Heart left ventricle (tissue), 16 donors: ENCODE measurements at regions of chr7 and their contacts with region 1.

Region 1: GRCh38 chr7:91519241-91520158 is 255.3 kb downstream of the FZD1 start:
- DNase-seq: no peak
- ATAC-seq: no peak
- H3K4me3 ChIP-seq: no peak overlapping the region
- H3K27ac ChIP-seq: no peak overlapping the region
- H3K4me1 ChIP-seq: peaks cover 0 to 11% (median 0%) of the 10 kb centered on the region in 12 donors
- H3K27me3 ChIP-seq: no peaks in the 10 kb centered on the region
- CTCF ChIP-seq: no peak
- POLR2A ChIP-seq: no peak

Region 2: DNA sequence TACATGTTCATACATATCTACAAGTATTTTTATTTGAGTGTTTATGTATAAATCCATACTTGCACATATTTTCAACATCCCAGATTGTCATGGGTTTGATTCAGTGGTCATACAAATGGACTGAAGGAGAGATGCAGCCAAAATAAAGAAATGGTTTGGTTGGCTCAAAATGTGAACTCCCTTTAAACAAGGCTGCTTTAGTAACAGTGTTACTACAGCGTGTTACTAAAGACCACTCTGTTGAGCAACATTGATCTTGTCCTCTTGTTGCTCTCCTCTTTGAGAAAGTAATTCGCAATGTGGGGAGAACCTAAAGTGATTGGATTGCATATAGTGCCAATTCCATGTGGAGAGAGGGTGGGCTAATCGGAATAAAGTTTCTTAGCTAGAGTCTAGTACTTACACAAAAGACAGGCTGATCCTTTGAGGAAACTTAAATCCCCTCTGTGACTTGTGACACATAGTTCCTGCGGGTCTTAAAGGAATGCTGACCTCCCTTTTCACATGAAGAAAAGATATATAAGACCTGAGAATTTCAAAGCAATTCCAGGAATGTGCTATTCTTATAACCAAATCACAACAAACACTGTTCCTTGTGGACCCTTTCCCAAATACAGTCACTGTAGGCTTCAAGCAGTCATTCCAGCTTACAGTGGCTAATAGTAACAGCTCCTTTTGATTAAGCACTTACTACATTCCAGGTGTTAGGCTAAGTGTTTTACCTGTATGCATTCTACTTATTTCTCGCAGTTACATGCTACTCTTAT is 110.9 kb before region 1 on chr7:
- intact Hi-C with region 1: no loop called
- DNase-seq: no peak
- ATAC-seq: no peak
- H3K4me3 ChIP-seq: no peak overlapping the region
- H3K27ac ChIP-seq: no peak overlapping the region
- H3K4me1 ChIP-seq: peaks cover 0 to 2% (median 0%) of the 10 kb centered on the region in 12 donors
- H3K27me3 ChIP-seq: no peaks in the 10 kb centered on the region
- CTCF ChIP-seq: no peak
- POLR2A ChIP-seq: no peak

Region 3: GRCh38 chr7:91582799-91583477 is 63.4 kb after region 1 on chr7:
- intact Hi-C with region 1: loop called in 1 of 10 experiments (anchors 10 kb)
- DNase-seq: no peak
- ATAC-seq: no peak
- H3K4me3 ChIP-seq: no peak overlapping the region
- H3K27ac ChIP-seq: no peak overlapping the region
- H3K4me1 ChIP-seq: no peaks in the 10 kb centered on the region
- H3K27me3 ChIP-seq: no peaks in the 10 kb centered on the region
- CTCF ChIP-seq: no peak
- POLR2A ChIP-seq: no peak

Region 4: DNA sequence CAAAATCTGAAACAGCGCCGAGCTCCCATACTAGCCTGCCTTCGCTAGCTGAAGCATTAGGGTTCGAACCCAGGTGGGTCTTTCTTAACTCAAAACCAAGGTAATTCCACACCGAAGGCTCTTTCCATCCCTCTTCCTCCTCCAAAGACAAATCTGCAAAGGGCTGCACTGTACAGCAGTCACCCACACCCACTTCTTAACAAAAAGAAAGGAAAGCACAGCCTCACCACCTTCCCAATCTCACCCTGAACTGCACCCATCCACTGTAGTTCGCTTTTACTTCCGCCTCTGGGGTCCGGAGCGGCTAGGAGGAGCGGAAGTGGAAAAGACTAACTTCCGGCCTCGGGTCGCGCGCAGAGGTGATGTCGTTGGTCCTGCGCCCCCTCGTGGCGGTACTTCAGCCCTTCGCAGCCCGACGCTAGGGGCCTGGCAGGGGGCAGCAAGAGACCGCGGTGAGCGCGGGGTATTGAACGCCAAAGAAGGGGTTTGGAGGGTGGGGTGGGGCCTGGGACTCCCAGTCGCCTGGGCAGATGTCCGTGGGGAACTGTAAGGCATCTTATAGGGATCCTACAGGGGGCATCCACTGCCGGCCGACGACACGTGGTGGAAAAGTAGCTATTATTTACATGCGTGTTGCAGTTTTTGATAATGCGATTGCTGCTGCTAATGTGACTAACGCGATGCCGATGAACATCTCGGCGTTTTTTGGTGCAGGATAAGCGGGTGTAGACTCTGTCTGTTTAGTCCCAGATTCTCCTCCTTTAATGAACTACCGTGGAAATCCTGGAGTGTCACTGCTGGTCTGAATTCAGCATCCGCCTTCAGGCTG is 361.1 kb after region 1 on chr7 and contains the start of gene MTERF1:
- intact Hi-C with region 1: no loop called
- DNase-seq: peak; percentile 93 to 95 (median 94)
- ATAC-seq: peak; percentile 94 to 100 (median 100)
- H3K4me3 ChIP-seq: peak within 1 kb of the TSS; percentile 66 to 98 (median 78)
- H3K27ac ChIP-seq: peak within 1 kb of the TSS in 7 of 12 donors; percentile 8 to 70 (median 60)
- H3K4me1 ChIP-seq: peaks cover 0 to 25% (median 11%) of the 10 kb centered on the region in 12 donors
- H3K27me3 ChIP-seq: no peaks in the 10 kb centered on the region
- CTCF ChIP-seq: peak; percentile 85 to 100 (median 96)
- POLR2A ChIP-seq: peak in 1 of 2 donors; percentile 24
- total RNA-seq, gene MTERF1: 5.5 to 11.6 (median 7.3) TPM